Ascending aorta (tissue), 2 donors: ENCODE measurements at regions of chr12 and their contacts with region 1.

Region 1: GRCh38 chr12:56117778-56118687 is at the start of gene ZC3H10:
- DNase-seq: peak; percentile 98 to 100
- H3K4me3 ChIP-seq: peak within 1 kb of the TSS; percentile 75 to 77
- H3K27ac ChIP-seq: peak within 1 kb of the TSS; percentile 94 to 95
- H3K4me1 ChIP-seq: peaks cover 10 to 16% of the 10 kb centered on the region in 2 donors
- H3K27me3 ChIP-seq: no peaks in the 10 kb centered on the region
- CTCF ChIP-seq: peak; percentile 50 to 59 (median 50)
- total RNA-seq, gene ZC3H10: 11.1 TPM

Region 2: DNA sequence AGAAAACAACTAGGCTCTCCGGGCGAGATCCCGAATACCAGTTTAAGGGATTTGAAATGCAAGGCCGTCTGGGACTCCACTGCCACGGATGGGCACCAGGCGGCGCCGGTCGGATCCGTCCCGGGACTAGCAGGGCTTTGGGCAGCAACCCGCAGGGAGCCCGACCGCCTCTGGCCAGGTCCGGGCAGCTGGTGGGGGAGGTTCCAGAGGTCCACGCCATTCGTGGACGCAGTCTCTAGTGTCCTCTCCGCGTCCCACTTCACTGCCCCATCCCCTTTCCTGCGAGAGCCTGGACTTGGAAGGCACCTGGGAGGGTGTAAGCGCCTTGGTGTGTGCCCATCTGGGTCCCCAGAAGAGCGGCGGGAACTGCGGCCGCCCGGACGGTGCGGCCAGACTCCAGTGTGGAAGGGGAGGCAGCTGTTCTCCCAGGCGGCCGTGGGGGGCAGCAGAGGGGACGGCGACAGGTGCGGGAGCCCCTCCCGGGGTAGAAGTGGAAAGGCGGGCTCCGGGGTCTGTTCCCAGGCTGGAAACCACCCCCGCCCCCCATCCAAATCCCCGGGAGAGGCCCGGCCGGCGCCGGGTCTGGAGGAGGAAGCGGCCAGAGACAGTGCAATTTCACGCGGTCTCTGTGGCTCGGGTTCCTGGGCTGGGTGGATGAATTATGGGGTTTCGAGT is 38.9 kb before region 1 on chr12:
- intact Hi-C with region 1: loop called (anchors 5 kb)
- DNase-seq: peak; percentile 53 to 94
- H3K4me3 ChIP-seq: peak overlapping the region; percentile 72 to 86
- H3K27ac ChIP-seq: peak overlapping the region; percentile 75 to 81
- H3K4me1 ChIP-seq: peaks cover 5 to 7% of the 10 kb centered on the region in 2 donors
- H3K27me3 ChIP-seq: no peaks in the 10 kb centered on the region
- CTCF ChIP-seq: peak; percentile 65 to 82 (median 77)

Region 3: DNA sequence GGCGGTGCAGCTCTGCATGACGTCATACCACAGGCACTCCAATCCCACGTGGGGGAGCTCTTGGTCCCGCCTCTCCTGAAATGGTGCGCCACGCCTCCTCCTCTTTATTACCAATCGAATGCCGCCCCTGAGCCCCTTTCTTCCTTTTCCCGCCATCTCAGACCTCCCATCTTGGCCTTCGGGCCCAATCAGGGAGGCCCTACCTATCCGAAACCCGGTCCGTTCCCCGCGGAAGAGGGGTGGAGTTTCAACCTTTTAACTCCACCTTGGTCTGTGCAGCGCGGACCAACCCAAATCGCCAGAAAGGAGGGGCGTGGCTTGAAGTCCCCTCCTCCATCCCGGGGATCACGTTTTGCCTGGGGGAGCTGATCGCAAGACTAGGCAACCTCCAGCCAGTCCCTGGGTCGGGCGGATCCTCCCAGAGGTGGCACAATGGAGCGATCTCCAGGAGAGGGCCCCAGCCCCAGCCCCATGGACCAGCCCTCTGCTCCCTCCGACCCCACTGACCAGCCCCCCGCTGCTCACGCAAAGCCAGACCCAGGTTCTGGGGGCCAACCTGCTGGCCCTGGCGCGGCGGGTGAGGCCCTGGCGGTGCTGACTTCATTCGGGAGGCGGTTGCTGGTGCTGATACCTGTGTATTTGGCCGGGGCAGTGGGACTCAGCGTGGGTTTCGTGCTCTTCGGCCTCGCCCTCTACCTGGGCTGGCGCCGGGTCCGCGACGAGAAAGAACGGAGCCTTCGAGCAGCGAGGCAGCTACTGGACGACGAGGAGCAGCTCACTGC is 10.0 kb after region 1 on chr12 and contains the start of gene ESYT1:
- intact Hi-C with region 1: loop called (anchors 1 kb)
- DNase-seq: peak; percentile 99 to 100
- H3K4me3 ChIP-seq: peak within 1 kb of the TSS; percentile 73 to 80
- H3K27ac ChIP-seq: peak within 1 kb of the TSS; percentile 87 to 88
- H3K4me1 ChIP-seq: peaks cover 9 to 21% of the 10 kb centered on the region in 2 donors
- H3K27me3 ChIP-seq: no peaks in the 10 kb centered on the region
- CTCF ChIP-seq: no peak
- total RNA-seq, gene ESYT1: 119 TPM

Region 4: GRCh38 chr12:56152318-56153033 is 34.4 kb after region 1 on chr12 and contains the start of gene MYL6B:
- intact Hi-C with region 1: no loop called
- DNase-seq: peak; percentile 69 to 96
- H3K4me3 ChIP-seq: peak within 1 kb of the TSS; percentile 68 to 93
- H3K27ac ChIP-seq: peak within 1 kb of the TSS; percentile 86 to 91
- H3K4me1 ChIP-seq: peaks cover 0 to 25% of the 10 kb centered on the region in 2 donors
- H3K27me3 ChIP-seq: no peaks in the 10 kb centered on the region
- CTCF ChIP-seq: no peak
- total RNA-seq, gene MYL6B: 53.6 TPM

Region 5: DNA sequence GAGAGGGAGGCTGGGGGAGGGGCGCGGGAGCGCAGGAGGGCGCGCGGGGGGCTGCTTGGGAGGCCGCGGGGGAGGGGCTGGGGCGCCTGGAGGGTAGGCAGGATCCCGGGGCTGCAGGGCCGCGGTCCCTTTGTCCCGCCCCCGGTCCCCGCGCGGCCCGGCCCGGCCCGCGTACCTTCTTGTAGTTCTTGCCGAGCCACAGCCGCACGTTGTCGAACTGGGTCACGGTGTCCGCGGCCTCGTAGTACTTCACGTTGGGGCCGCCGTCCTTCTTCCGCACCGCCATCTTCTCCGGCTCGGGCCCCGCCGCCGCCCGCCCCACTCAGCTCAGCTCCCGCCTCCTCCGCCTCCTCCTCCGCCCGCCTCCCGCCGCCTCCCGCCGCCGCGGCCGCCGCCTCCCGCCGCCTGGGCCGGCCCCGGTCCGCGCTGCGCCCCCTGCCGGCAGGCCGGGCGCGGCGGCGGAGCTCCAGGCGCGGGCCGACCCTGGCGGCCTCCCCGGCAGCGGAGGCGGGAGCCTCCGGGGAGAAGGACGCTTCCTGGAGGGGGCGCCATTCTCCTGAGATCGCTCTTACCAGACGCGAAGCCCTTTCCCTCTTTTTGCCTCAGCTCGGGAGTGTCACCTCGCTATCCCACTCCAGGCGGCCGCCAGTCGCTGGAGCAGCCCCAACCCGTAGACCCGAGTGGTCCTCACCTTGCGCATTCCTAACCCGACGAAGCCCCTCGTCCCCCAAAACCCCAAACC is 71.3 kb after region 1 on chr12 and contains the start of gene SMARCC2:
- intact Hi-C with region 1: loop called (anchors 1 kb)
- DNase-seq: peak; percentile 39 to 94
- H3K4me3 ChIP-seq: peak within 1 kb of the TSS; percentile 68 to 91
- H3K27ac ChIP-seq: peak within 1 kb of the TSS; percentile 92 to 97
- H3K4me1 ChIP-seq: peaks cover 3 to 6% of the 10 kb centered on the region in 2 donors
- H3K27me3 ChIP-seq: no peaks in the 10 kb centered on the region
- CTCF ChIP-seq: peak; percentile 68 to 94 (median 70)
- total RNA-seq, gene SMARCC2: 53.9 TPM

Region 6: GRCh38 chr12:56315622-56316473 is 197.8 kb after region 1 on chr12 and contains the start of gene CNPY2:
- intact Hi-C with region 1: loop called (anchors 5 kb)
- DNase-seq: peak; percentile 90 to 98
- H3K4me3 ChIP-seq: peak within 1 kb of the TSS; percentile 74 to 79
- H3K27ac ChIP-seq: peak within 1 kb of the TSS; percentile 80 to 91
- H3K4me1 ChIP-seq: peaks cover 7 to 10% of the 10 kb centered on the region in 2 donors
- H3K27me3 ChIP-seq: no peaks in the 10 kb centered on the region
- CTCF ChIP-seq: peak in 2 of 3 experiments; percentile 6 to 16
- total RNA-seq, gene CNPY2: 34.6 TPM

Region 7: GRCh38 chr12:56645717-56646446 is 527.8 kb after region 1 on chr12 and contains the start of gene ATP5F1B:
- intact Hi-C with region 1: loop called (anchors 5 kb)
- DNase-seq: peak; percentile 97 to 98
- H3K4me3 ChIP-seq: peak within 1 kb of the TSS; percentile 94
- H3K27ac ChIP-seq: peak within 1 kb of the TSS; percentile 88 to 91
- H3K4me1 ChIP-seq: peaks cover 10 to 12% of the 10 kb centered on the region in 2 donors
- H3K27me3 ChIP-seq: no peaks in the 10 kb centered on the region
- CTCF ChIP-seq: no peak
- total RNA-seq, gene ATP5F1B: 197 TPM